ENCODE measurements at regions of chr3 and their contacts with region 1.

Region 1: DNA sequence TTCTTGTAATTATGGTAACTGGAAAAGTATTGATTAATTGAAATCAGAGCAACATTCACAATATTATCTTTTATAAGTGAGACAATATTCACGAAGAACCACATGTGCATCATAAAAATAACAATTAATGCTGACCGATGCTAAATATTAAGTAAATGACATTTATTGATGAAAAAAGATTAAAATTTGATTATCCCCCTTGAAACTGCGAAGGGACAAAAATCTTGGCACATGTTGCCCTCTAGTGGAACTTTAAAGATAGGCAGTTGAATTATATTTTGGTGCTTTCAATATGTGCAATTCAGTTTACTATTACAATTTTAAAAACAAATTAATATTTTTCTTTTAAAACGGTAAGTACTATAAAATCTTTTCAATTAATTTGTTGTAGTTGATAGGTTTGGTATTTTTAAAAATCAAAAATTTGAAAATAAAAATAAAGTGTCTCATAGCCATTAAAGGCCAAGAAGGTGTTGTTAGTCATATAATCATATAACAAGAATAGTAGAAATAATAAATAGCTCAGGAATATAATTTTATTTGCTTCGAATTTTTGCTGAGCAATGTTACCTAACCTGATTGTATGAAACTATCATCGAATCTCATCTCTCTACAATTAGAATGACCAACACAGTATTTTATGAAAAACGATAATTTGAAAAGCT is 270.2 kb downstream of the ROBO1 start:
- DNase-seq: no peak
- ATAC-seq: no peak
- H3K4me3 ChIP-seq: no peak overlapping the region
- H3K27ac ChIP-seq: no peak overlapping the region
- H3K4me1 ChIP-seq: no peaks in the 10 kb centered on the region
- H3K27me3 ChIP-seq: no peaks in the 10 kb centered on the region
- CTCF ChIP-seq: peak; percentile 67; the same call in 1 of the 2 replicates

Region 2: DNA sequence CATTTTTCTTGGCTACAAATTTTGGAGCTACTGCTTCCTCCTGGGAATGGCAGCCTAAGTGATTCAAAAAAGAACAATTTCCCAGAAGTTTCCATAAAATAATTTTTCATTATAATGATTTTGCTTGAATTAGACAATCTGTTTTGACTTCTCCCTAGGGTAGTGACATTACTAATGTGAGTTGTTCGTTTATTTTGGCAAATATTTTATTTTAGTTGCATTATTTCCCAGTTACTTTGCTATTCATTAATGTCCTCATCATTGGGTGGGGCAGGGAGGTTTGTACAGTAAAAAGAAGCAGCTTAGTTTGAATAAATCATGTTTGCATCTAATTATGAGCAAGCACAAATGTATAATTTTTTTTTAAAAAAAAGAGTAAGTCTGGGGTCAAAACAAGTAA is 1771.1 kb before region 1 on chr3:
- CTCF ChIA-PET with region 1: no interaction called
- POLR2A ChIA-PET with region 1: no interaction called
- in situ Hi-C with region 1: no loop called
- intact Hi-C with region 1: no loop called
- DNase-seq: no peak
- ATAC-seq: no peak
- H3K4me3 ChIP-seq: no peak overlapping the region
- H3K27ac ChIP-seq: no peak overlapping the region
- H3K4me1 ChIP-seq: no peaks in the 10 kb centered on the region
- H3K27me3 ChIP-seq: no peaks in the 10 kb centered on the region
- CTCF ChIP-seq: no peak

Region 3: GRCh38 chr3:79086514-79086913 is 411.1 kb before region 1 on chr3:
- CTCF ChIA-PET with region 1: no interaction called
- POLR2A ChIA-PET with region 1: no interaction called
- in situ Hi-C with region 1: no loop called
- intact Hi-C with region 1: loop called (anchors 10 kb)
- DNase-seq: peak; percentile 32
- ATAC-seq: no peak; the same call in 1 of the 2 replicates
- H3K4me3 ChIP-seq: no peak overlapping the region
- H3K27ac ChIP-seq: no peak overlapping the region
- H3K4me1 ChIP-seq: no peaks in the 10 kb centered on the region
- H3K27me3 ChIP-seq: no peaks in the 10 kb centered on the region
- CTCF ChIP-seq: peak; percentile 79

Region 4: GRCh38 chr3:79436387-79436786 is 61.2 kb before region 1 on chr3:
- CTCF ChIA-PET with region 1: no interaction called
- POLR2A ChIA-PET with region 1: no interaction called
- in situ Hi-C with region 1: no loop called
- intact Hi-C with region 1: no loop called
- DNase-seq: no peak
- ATAC-seq: no peak
- H3K4me3 ChIP-seq: no peak overlapping the region
- H3K27ac ChIP-seq: no peak overlapping the region
- H3K4me1 ChIP-seq: no peaks in the 10 kb centered on the region
- H3K27me3 ChIP-seq: no peaks in the 10 kb centered on the region
- CTCF ChIP-seq: no peak

Region 5: GRCh38 chr3:79572930-79573329 is 75.4 kb after region 1 on chr3:
- CTCF ChIA-PET with region 1: no interaction called
- POLR2A ChIA-PET with region 1: no interaction called
- in situ Hi-C with region 1: no loop called
- intact Hi-C with region 1: no loop called
- DNase-seq: no peak
- ATAC-seq: no peak
- H3K4me3 ChIP-seq: no peak overlapping the region
- H3K27ac ChIP-seq: no peak overlapping the region
- H3K4me1 ChIP-seq: no peaks in the 10 kb centered on the region
- H3K27me3 ChIP-seq: no peaks in the 10 kb centered on the region
- CTCF ChIP-seq: no peak